GM12878 (cell line): ENCODE measurements at regions of chr10 and their contacts with region 1.

Region 1: GRCh38 chr10:110617425-110618229 is 26.5 kb upstream of the RBM20 start:
- DNase-seq: no peak
- ATAC-seq: no peak
- H3K4me3 ChIP-seq: no peak overlapping the region
- H3K27ac ChIP-seq: no peak overlapping the region
- H3K4me1 ChIP-seq: peaks cover 27% of the 10 kb centered on the region
- H3K27me3 ChIP-seq: no peaks in the 10 kb centered on the region
- CTCF ChIP-seq: no peak
- EP300 ChIP-seq: no peak
- POLR2A ChIP-seq: no peak
- RAD21 ChIP-seq: no peak

Region 2: DNA sequence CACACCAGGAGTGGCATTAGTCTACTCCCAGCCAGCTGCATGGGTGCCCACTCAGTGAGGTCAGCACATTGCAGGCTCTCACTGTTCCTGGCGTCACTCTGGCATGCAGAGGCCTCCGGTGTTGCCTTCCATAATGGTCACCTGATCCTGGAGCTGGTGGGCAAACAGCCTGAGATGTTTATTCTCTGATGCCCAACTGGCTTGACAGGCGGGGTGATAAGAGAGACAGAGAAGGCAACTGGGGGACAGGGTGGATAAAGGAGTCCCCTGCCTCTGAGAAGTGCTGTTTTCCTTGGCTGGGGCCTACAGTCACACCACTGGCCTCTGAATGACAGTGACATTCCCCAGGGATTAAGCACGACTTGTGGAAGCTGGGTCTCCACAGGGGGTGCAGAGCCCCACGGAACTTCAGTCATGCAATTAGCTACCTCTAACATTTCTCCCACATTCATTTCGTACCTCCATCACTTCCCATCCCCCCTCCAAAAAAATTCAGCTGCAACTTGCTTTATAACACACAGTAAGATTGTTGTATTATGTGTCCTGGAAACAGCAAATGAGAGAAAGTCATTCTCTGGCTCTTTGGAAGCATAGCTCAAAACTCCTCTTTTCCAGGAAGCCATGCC is 19.4 kb after region 1 on chr10:
- CTCF ChIA-PET with region 1: interaction called, 4 read pairs
- POLR2A ChIA-PET with region 1: interaction called, 3 read pairs
- RAD21 ChIA-PET with region 1: interaction called, 3 read pairs
- SMC1A ChIA-PET with region 1: interaction called, 11 read pairs
- in situ Hi-C with region 1: no loop called
- intact Hi-C with region 1: no loop called
- DNase-seq: no peak
- ATAC-seq: no peak
- H3K4me3 ChIP-seq: no peak overlapping the region
- H3K27ac ChIP-seq: no peak overlapping the region
- H3K4me1 ChIP-seq: peaks cover 4% of the 10 kb centered on the region; the same call in 1 of the 2 replicates
- H3K27me3 ChIP-seq: peaks cover 0 to 3% of the 10 kb centered on the region in 2 experiments; a peak in 2 of 4 replicates
- CTCF ChIP-seq: no peak
- EP300 ChIP-seq: no peak
- POLR2A ChIP-seq: no peak
- RAD21 ChIP-seq: no peak

Region 3: DNA sequence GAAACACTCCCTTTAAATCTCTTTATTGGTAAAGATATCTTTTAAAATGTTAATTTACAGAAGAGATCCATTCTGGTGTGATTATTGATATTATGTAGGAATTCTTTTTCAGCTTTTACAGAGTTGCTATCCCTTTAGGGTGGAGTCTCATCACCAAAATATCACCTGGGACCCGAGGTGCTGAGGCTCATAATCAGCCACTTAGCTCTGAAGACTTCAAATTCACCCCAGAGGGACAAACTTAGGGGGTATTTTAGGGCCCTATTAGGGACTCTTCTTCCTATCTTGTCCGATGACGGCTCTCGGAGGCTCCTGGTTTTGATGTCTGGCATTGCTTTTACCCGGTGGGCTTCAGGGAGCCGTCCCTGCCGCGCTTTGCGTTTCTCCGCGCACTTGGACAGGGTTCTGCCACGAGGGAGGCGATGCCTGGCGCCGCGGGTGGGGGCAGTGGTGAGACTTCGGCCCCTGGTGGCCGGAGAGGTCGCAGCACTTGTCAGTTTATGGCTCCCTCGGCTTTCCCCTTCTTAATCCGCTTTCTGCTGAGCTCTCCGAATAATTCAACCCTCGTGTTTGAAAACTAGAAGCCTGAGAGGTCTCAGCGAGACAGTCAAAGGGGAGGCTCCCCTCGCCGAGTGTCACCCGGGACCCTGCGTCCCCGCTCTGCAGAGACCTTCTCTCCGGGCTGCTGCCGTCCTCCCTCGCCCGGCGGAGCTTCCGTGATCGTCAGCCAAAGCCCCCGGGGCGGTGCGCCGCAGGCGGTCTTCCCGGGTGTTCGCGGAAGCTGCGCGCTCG is 54.4 kb after region 1 on chr10:
- CTCF ChIA-PET with region 1: interaction called, 141 read pairs
- POLR2A ChIA-PET with region 1: interaction called, 6 read pairs
- RAD21 ChIA-PET with region 1: interaction called, 50 read pairs
- SMC1A ChIA-PET with region 1: interaction called, 98 read pairs
- in situ Hi-C with region 1: no loop called
- intact Hi-C with region 1: no loop called
- DNase-seq: peak; percentile 27
- ATAC-seq: peak; percentile 99
- H3K4me3 ChIP-seq: peak overlapping the region; percentile 74
- H3K27ac ChIP-seq: peak overlapping the region; percentile 62
- H3K4me1 ChIP-seq: no peaks in the 10 kb centered on the region
- H3K27me3 ChIP-seq: no peaks in the 10 kb centered on the region
- CTCF ChIP-seq: peak; percentile 99 to 100 (median 99)
- EP300 ChIP-seq: no peak
- POLR2A ChIP-seq: peak; percentile 80
- RAD21 ChIP-seq: peak; percentile 64